BJ (cell line): ENCODE measurements at regions of chr13 and their contacts with region 1.

Region 1: GRCh38 chr13:32045982-32046785 is 14.6 kb downstream of the FRY start:
- DNase-seq: no peak
- H3K4me3 ChIP-seq: no peak overlapping the region
- H3K27me3 ChIP-seq: no peaks in the 10 kb centered on the region
- CTCF ChIP-seq: no peak

Region 2: DNA sequence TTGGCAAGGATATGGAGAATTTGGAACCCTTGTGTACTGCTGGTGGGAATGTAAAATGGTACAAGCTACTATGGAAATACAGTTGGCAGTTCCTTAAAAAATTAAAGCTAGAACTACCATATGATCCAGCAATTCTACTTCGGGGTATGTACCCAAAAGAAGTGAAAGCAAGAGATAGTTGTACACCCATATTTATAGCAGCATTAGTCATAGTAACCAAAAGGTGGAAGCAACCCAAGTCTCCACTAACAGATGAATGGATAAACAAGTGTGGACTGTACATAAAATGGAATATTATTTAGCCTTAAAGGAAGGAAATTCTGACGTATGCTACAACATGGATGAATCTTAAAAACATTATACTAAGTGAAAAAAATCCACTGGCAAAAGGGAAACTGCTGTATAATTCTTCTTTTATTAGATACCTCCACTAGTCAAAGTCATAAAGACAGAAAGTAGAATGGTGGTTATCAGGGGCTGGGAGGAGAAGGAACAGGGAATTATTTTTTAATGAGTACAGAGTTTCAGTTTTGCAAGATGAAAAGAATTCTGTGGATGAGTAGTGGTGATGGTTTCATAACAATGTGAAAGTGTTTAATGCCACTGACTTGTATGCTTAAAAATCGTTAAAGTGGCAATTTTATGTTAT is 165.2 kb before region 1 on chr13:
- CTCF ChIA-PET with region 1: no interaction called
- POLR2A ChIA-PET with region 1: interaction called, 15 read pairs
- DNase-seq: peak; percentile 26
- H3K4me3 ChIP-seq: no peak overlapping the region
- H3K27me3 ChIP-seq: no peaks in the 10 kb centered on the region
- CTCF ChIP-seq: no peak

Region 3: DNA sequence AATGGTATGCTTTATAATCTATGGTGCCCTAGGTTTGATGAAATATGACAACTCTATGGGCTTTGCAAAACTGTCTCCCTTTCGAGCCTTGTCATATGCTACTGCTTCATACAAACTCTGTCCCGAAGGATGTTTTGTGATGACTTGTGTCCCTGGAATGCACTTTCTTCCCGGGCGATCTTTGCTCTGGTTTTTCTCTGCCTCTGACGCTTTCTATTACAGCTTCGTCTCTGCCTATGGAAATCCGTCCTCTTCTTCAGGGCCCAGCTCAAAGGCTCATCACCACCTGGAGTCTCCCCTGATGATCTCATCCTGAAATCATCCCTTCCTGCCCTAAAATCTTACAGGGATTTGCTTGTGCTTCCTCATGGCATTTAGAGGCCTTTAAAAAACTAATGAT is 778.5 kb after region 1 on chr13:
- CTCF ChIA-PET with region 1: no interaction called
- POLR2A ChIA-PET with region 1: interaction called, 15 read pairs
- DNase-seq: peak; percentile 73
- H3K4me3 ChIP-seq: no peak overlapping the region
- H3K27me3 ChIP-seq: no peaks in the 10 kb centered on the region
- CTCF ChIP-seq: no peak